Activated T-helper 1 cell treated with anti-CD3 and anti-CD28 coated beads, Interleukin-12 subunit alpha, Interleukin-12 subunit beta, Interleukin-2, Interleukin-4 antibody, amounts not matched to agents 30 ng/mL and 10 ng/mL and 1 ng/mL, durations not matched to agents 14 hours and 24 hours and 36 hours (primary cell): ENCODE measurements at regions of chr2 and their contacts with region 1.

Region 1: DNA sequence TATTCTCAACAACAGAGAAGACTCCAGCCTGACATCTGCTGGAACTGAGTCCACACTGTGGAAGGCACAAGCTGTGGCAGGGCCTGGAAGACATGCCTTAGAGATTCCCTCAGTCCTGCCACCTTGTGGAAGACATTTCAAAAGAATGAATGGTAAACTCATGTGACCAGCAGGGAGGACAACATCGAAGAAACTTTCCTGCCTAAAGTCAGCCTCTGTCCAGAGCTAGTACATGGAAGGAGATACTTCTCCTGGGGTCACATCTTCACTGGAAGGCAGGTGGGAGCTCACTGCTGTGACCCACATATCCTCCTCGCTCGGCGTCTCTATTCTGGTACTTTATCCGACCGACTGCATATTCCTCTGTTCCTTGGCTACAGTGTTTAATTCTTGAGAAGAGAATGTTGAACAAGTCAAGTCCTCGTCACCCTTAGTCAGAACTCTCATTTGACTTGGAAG is 59.5 kb downstream of the PUM2 start:
- DNase-seq: no peak
- H3K4me3 Mint-ChIP-seq: no peak overlapping the region
- H3K27ac Mint-ChIP-seq: peak overlapping the region; percentile 1
- H3K4me1 Mint-ChIP-seq: peaks cover 6% of the 10 kb centered on the region
- H3K27me3 Mint-ChIP-seq: no peaks in the 10 kb centered on the region

Region 2: GRCh38 chr2:20223407-20224163 is 67.5 kb before region 1 on chr2:
- intact Hi-C with region 1: no loop called
- DNase-seq: no peak
- H3K4me3 Mint-ChIP-seq: no peak overlapping the region
- H3K27ac Mint-ChIP-seq: no peak overlapping the region
- H3K4me1 Mint-ChIP-seq: no peaks in the 10 kb centered on the region
- H3K27me3 Mint-ChIP-seq: peaks cover 57% of the 10 kb centered on the region

Region 3: DNA sequence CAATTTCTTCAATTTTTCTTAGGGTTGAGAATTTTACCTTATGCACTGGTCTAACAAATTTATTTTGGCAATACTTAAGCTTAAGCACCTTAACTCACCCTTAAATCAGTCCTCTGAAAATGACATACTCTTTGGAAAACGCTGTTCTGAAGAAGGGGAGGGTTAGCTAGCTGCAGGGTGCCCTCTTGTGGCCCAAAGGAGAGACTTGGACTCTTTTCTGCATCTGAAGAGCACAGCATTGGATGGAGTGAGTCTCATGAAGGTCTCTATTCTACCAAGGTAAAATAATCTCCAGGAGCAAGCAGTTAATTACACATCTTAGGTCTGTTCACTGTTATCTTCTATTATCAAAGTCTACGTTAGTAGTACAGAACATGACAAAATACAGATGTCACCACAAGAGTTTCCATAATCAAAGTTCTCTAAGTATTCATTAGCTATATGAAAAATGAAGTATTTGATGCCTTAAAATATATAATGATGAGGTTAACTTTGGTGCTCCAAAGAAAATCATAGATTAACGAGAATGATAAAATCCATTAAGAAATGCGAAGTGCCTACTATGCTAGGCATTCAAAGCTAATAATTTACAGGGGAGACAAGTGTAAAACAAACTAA is 35.1 kb after region 1 on chr2:
- intact Hi-C with region 1: loop called (anchors 2 kb)
- DNase-seq: peak; percentile 25
- H3K4me3 Mint-ChIP-seq: no peak overlapping the region
- H3K27ac Mint-ChIP-seq: peak overlapping the region; percentile 4
- H3K4me1 Mint-ChIP-seq: peaks cover 76% of the 10 kb centered on the region
- H3K27me3 Mint-ChIP-seq: no peaks in the 10 kb centered on the region